Activated naive CD4-positive, alpha-beta T cell treated with anti-CD3 and anti-CD28 coated beads for 36 hours (primary cell): ENCODE measurements at regions of chr6 and their contacts with region 1.

Region 1: DNA sequence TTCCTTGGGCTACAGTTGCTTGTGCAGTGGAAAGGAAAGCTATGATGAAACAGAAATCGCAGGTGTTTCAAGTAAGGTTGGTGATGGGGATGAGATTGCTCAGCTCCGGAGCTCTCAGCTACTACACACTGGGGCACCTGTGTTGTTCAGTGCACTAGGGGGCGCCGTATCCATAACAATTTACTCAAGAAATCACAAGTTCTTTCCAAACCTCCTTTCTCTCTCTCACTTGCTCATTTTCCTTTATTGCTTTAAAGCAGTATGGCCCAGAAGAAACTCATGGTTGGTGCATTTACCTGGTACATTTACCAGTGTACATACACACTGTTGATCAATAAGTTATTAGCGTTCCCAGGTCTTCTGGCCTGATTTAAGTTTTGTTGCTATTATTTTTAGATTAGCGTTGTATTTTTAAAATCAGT is 235.2 kb upstream of the TAB2 start:
- DNase-seq: peak; percentile 97
- H3K4me3 Mint-ChIP-seq: no peak overlapping the region
- H3K27ac Mint-ChIP-seq: peak overlapping the region; percentile 41
- H3K4me1 Mint-ChIP-seq: peaks cover 54% of the 10 kb centered on the region
- H3K27me3 Mint-ChIP-seq: no peaks in the 10 kb centered on the region

Region 2: DNA sequence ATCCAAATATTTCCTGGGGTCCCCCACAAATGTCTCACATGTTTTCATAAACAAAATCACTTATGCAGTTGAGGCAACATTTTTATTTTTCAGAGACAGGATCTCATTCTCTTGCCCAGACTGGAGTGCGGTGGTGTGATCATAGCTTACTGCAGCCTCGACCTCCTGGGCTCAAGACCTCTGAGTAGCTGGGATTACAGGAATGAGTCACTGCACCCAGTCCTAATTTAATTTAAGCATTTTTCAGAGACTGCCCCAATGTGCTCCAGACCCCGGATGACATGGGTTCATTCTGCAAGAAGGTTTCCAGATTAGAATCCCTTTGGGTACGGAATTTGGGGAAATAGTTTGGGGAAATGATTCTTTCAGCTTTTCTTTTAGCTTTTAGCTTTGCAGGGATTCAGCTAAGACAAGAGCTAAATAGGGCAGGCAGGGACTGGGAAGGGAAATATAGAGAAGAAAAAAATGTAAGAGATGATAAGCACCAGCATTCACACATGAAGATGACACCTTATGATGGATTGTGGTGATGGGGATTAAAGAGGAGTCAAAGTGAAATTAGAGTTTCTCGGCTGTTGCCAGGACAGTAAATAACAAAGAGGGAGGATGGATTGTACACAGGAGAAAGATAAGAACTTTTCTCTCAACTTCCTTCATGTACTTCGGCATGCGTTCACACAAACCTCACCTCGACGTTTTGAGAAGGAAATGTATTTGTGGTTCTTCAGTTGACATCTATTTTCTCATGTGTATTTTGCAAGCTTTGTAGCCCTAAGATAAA is 65.8 kb after region 1 on chr6:
- CTCF ChIA-PET with region 1: interaction called, 3 read pairs
- intact Hi-C with region 1: loop called (anchors 1 kb)
- DNase-seq: peak; percentile 27
- H3K4me3 Mint-ChIP-seq: no peak overlapping the region
- H3K27ac Mint-ChIP-seq: peak overlapping the region; percentile 56
- H3K4me1 Mint-ChIP-seq: peaks cover 58% of the 10 kb centered on the region
- H3K27me3 Mint-ChIP-seq: no peaks in the 10 kb centered on the region